ENCODE measurements at regions of chr6 and their contacts with region 1.

Region 1: DNA sequence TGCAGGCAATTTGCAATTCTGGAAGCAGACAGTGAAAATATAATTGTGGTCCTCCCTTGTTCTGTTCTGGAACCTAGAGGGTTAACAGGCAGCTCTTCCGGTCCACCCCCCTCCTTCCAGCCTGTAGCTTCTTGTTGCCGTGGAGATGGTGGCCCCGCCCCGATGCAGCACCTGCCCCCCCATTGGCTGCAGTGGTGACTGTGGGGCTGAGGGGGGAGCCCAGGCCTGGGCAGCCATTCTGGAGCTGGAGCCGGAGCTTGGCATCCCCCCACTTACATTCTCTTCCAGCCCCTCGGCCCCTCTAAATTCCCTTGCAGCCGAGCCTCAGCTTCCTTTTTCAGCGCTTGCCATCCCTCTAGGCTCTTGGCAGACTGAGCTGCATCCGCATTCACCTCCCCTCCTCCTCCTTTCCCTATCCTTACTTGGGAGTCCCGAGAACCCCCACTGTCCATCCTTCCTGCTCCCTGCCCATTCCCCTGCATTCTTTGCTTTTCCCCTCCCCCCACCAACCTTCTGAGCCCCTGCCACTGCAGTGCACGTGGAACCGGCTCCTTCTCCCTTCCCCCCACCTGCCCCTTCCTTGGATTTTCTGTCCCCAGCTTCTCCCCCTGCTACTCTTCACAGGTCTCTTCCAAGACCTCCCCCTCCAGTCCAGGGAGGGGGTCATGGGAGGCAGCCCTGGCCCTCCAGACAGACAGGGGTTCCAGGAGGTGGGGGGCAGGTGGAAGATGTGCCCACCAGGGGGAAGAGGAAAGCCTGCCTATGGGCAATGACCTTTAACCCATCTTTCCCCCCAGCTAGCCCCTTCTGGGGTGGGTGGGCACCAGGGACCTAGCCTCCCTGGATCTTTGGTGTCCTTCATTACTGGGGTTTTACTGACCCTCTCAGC is 11.4 kb downstream of the SYNGAP1 start:
- DNase-seq: peak; percentile 82 to 91 (median 84)
- H3K4me3 ChIP-seq: peak overlapping the region; percentile 11 to 54
- H3K4me3 Mint-ChIP-seq: peak overlapping the region; percentile 71 to 94 (median 90)
- H3K27ac ChIP-seq: peak overlapping the region; percentile 76
- H3K27ac Mint-ChIP-seq: peak overlapping the region; percentile 94 to 99 (median 98)
- H3K4me1 ChIP-seq: peaks cover 53% of the 10 kb centered on the region
- H3K4me1 Mint-ChIP-seq: peaks cover 48 to 66% (median 60%) of the 10 kb centered on the region in 4 donors
- H3K27me3 ChIP-seq: no peaks in the 10 kb centered on the region
- H3K27me3 Mint-ChIP-seq: no peaks in the 10 kb centered on the region

Region 2: DNA sequence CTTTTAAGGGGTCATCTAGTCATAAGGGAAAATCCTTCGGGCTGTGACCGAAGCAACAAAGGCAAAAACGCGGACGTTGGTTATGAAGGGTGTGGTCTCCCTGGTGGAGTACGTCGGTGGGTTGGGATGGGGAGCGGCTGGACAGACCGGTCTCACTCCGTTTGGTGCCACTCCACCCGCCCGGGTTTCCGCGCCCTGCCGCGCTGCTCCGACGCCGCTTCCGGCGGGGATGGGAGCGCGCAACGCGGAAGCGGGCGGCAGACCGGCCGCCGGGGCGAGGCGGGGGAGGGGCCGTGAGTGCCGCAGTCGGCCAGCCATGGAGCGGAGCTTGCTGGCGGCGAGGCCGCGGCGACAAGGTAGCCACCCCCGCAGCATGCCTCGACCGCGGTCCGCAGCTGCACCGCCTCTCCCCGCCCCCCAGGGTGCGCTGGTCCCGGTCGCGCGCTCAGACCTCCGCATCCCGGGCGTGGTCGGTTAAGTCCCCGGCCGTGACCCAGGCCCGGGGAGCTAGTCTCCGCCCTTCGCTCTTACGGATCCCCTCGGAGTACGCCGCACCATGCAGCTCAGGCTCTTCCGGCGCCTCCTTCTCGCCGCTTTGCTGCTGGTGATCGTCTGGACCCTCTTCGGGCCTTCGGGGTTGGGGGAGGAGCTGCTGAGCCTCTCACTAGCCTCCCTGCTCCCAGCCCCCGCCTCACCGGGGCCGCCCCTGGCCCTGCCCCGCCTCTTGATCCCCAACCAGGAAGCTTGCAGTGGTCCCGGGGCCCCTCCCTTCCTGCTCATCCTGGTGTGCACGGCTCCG is 154.2 kb before region 1 on chr6 and contains the start of gene B3GALT4:
- CTCF ChIA-PET with region 1: interaction called, 4 read pairs
- POLR2A ChIA-PET with region 1: interaction called, 24 read pairs
- intact Hi-C with region 1: no loop called
- DNase-seq: peak; percentile 66 to 77 (median 75)
- H3K4me3 ChIP-seq: peak within 1 kb of the TSS; percentile 72 to 79
- H3K4me3 Mint-ChIP-seq: peak within 1 kb of the TSS; percentile 89 to 93 (median 91)
- H3K27ac ChIP-seq: peak within 1 kb of the TSS; percentile 82
- H3K27ac Mint-ChIP-seq: peak within 1 kb of the TSS; percentile 90 to 97 (median 94)
- H3K4me1 ChIP-seq: peaks cover 71% of the 10 kb centered on the region
- H3K4me1 Mint-ChIP-seq: peaks cover 35 to 87% (median 59%) of the 10 kb centered on the region in 4 donors
- H3K27me3 ChIP-seq: no peaks in the 10 kb centered on the region
- H3K27me3 Mint-ChIP-seq: no peaks in the 10 kb centered on the region
- total RNA-seq, gene B3GALT4: 43.3 to 46.7 TPM

Region 3: DNA sequence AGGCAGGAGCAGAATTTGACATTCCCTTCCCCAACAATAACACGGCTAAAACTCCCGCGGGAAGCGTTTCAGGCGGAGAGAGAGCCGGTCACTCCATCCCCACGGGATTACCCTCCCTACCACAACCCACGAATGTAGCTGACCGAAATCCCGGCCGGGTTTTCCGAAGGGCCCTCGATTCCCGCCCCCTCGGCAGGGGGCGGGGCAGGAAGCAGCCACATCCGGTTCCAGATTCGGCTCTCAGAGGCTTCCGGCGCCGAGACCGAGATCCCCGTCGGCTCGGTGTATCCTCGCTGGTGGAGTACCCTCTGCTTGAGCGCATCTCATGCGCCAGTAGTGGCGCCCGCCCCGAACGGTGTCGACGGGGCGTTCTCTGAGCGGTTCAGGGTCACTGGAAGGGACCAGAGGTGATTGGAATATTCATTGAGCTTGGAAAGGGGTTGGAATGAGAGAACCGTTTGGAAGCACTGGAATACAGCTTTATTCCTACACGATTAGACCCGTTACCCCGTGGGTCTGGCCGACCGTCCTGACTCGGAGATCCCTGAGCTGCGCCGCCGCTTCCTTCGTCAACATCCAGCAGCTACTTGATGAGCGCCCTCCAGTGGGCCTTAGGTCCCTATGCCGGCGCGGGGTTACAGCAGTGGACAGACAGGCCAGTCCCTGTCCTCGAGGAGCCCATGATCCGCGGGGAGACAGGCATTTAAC is 131.8 kb before region 1 on chr6:
- CTCF ChIA-PET with region 1: interaction called, 3 read pairs
- POLR2A ChIA-PET with region 1: interaction called, 14 read pairs
- intact Hi-C with region 1: no loop called
- DNase-seq: peak; percentile 91 to 94 (median 93)
- H3K4me3 ChIP-seq: peak overlapping the region; percentile 71 to 97
- H3K4me3 Mint-ChIP-seq: peak overlapping the region; percentile 99
- H3K27ac ChIP-seq: peak overlapping the region; percentile 94
- H3K27ac Mint-ChIP-seq: peak overlapping the region; percentile 96 to 100 (median 99)
- H3K4me1 ChIP-seq: peaks cover 27% of the 10 kb centered on the region
- H3K4me1 Mint-ChIP-seq: peaks cover 22 to 42% (median 31%) of the 10 kb centered on the region in 4 donors
- H3K27me3 ChIP-seq: no peaks in the 10 kb centered on the region
- H3K27me3 Mint-ChIP-seq: peaks cover 0 to 4% of the 10 kb centered on the region in 2 donors

Region 4: GRCh38 chr6:33344701-33345697 is 86.2 kb before region 1 on chr6:
- CTCF ChIA-PET with region 1: interaction called, 7 read pairs
- POLR2A ChIA-PET with region 1: interaction called, 28 read pairs
- intact Hi-C with region 1: no loop called
- DNase-seq: peak; percentile 81 to 87 (median 84)
- H3K4me3 ChIP-seq: peak overlapping the region; percentile 11 to 61
- H3K4me3 Mint-ChIP-seq: peak overlapping the region; percentile 76 to 92 (median 85)
- H3K27ac ChIP-seq: peak overlapping the region; percentile 79
- H3K27ac Mint-ChIP-seq: peak overlapping the region; percentile 88 to 99 (median 98)
- H3K4me1 ChIP-seq: peaks cover 44% of the 10 kb centered on the region
- H3K4me1 Mint-ChIP-seq: peaks cover 23 to 49% (median 37%) of the 10 kb centered on the region in 4 donors
- H3K27me3 ChIP-seq: no peaks in the 10 kb centered on the region
- H3K27me3 Mint-ChIP-seq: no peaks in the 10 kb centered on the region

Region 5: GRCh38 chr6:33417903-33418689 is 13.1 kb before region 1 on chr6 and contains the start of gene CUTA:
- CTCF ChIA-PET with region 1: interaction called, 8 read pairs
- POLR2A ChIA-PET with region 1: interaction called, 77 read pairs
- intact Hi-C with region 1: loop called (anchors 1 kb)
- DNase-seq: peak; percentile 97 to 100 (median 100)
- H3K4me3 ChIP-seq: peak within 1 kb of the TSS; percentile 82 to 94
- H3K4me3 Mint-ChIP-seq: peak within 1 kb of the TSS; percentile 87 to 97 (median 94)
- H3K27ac ChIP-seq: peak within 1 kb of the TSS; percentile 97
- H3K27ac Mint-ChIP-seq: peak within 1 kb of the TSS; percentile 99 to 100 (median 99)
- H3K4me1 ChIP-seq: peaks cover 72% of the 10 kb centered on the region
- H3K4me1 Mint-ChIP-seq: peaks cover 43 to 87% (median 61%) of the 10 kb centered on the region in 4 donors
- H3K27me3 ChIP-seq: no peaks in the 10 kb centered on the region
- H3K27me3 Mint-ChIP-seq: no peaks in the 10 kb centered on the region
- total RNA-seq, gene CUTA: 210 to 217 TPM

Region 6: GRCh38 chr6:33570806-33571636 is 139.8 kb after region 1 on chr6:
- CTCF ChIA-PET with region 1: no interaction called
- POLR2A ChIA-PET with region 1: interaction called, 22 read pairs
- intact Hi-C with region 1: loop called (anchors 2 kb)
- DNase-seq: peak; percentile 92 to 98 (median 95)
- H3K4me3 ChIP-seq: peak overlapping the region; percentile 13 to 72
- H3K4me3 Mint-ChIP-seq: peak overlapping the region; percentile 90 to 97 (median 94)
- H3K27ac ChIP-seq: peak overlapping the region; percentile 93
- H3K27ac Mint-ChIP-seq: peak overlapping the region; percentile 99 to 100 (median 100)
- H3K4me1 ChIP-seq: peaks cover 23% of the 10 kb centered on the region
- H3K4me1 Mint-ChIP-seq: peaks cover 12 to 44% (median 31%) of the 10 kb centered on the region in 4 donors
- H3K27me3 ChIP-seq: no peaks in the 10 kb centered on the region
- H3K27me3 Mint-ChIP-seq: no peaks in the 10 kb centered on the region

Measured in CD4-positive, alpha-beta memory T cell (primary cell).